Prostate gland (tissue), 2 donors: ENCODE measurements at regions of chr1 and their contacts with region 1.

Region 1: GRCh38 chr1:228275739-228276421 is 68.0 kb downstream of the OBSCN start:
- DNase-seq: peak; percentile 85
- H3K4me3 ChIP-seq: peak overlapping the region; percentile 40 to 41
- H3K27ac ChIP-seq: peak overlapping the region; percentile 67 to 71
- H3K4me1 ChIP-seq: no peaks in the 10 kb centered on the region
- H3K27me3 ChIP-seq: no peaks in the 10 kb centered on the region
- CTCF ChIP-seq: no peak
- POLR2A ChIP-seq: peak; percentile 36

Region 2: GRCh38 chr1:228139944-228140656 is 135.8 kb before region 1 on chr1 and contains the start of gene GUK1:
- intact Hi-C with region 1: loop called (anchors 10 kb)
- DNase-seq: peak; percentile 100
- H3K4me3 ChIP-seq: peak within 1 kb of the TSS; percentile 95 to 98
- H3K27ac ChIP-seq: peak within 1 kb of the TSS; percentile 95
- H3K4me1 ChIP-seq: peaks cover 9% of the 10 kb centered on the region
- H3K27me3 ChIP-seq: no peaks in the 10 kb centered on the region
- CTCF ChIP-seq: peak; percentile 17 to 81 (median 42)
- POLR2A ChIP-seq: peak; percentile 98
- total RNA-seq, gene GUK1: 250 to 458 TPM

Region 3: GRCh38 chr1:228165372-228166169 is 110.3 kb before region 1 on chr1 and contains the start of gene IBA57:
- intact Hi-C with region 1: no loop called
- DNase-seq: peak; percentile 99
- H3K4me3 ChIP-seq: peak within 1 kb of the TSS; percentile 67 to 92
- H3K27ac ChIP-seq: peak within 1 kb of the TSS; percentile 92 to 99
- H3K4me1 ChIP-seq: peaks cover 5% of the 10 kb centered on the region
- H3K27me3 ChIP-seq: no peaks in the 10 kb centered on the region
- CTCF ChIP-seq: peak; percentile 95 to 100 (median 98)
- POLR2A ChIP-seq: peak; percentile 91
- total RNA-seq, gene IBA57: 5.6 to 17.4 TPM

Region 4: GRCh38 chr1:228378090-228378872 is 102.4 kb after region 1 on chr1:
- intact Hi-C with region 1: loop called (anchors 5 kb)
- DNase-seq: no peak
- H3K4me3 ChIP-seq: peak overlapping the region; percentile 36 to 40
- H3K27ac ChIP-seq: peak overlapping the region; percentile 36 to 60
- H3K4me1 ChIP-seq: no peaks in the 10 kb centered on the region
- H3K27me3 ChIP-seq: no peaks in the 10 kb centered on the region
- CTCF ChIP-seq: peak in 3 of 4 experiments; percentile 21 to 59 (median 50)
- POLR2A ChIP-seq: no peak